ENCODE measurements at regions of chrX and their contacts with region 1.

Region 1: GRCh38 chrX:1165535-1166196 is 46.8 kb downstream of the CRLF2 start:
- DNase-seq: peak; percentile 46
- H3K4me3 Mint-ChIP-seq: peak overlapping the region; percentile 39
- H3K27ac Mint-ChIP-seq: no peak overlapping the region
- H3K4me1 Mint-ChIP-seq: peaks cover 13% of the 10 kb centered on the region
- H3K27me3 Mint-ChIP-seq: peaks cover 8% of the 10 kb centered on the region

Region 2: GRCh38 chrX:572537-573124 is 593.0 kb before region 1 on chrX:
- CTCF ChIA-PET with region 1: no interaction called
- POLR2A ChIA-PET with region 1: no interaction called
- intact Hi-C with region 1: loop called (anchors 10 kb)
- DNase-seq: peak; percentile 12
- H3K4me3 Mint-ChIP-seq: no peak overlapping the region
- H3K27ac Mint-ChIP-seq: no peak overlapping the region
- H3K4me1 Mint-ChIP-seq: no peaks in the 10 kb centered on the region
- H3K27me3 Mint-ChIP-seq: no peaks in the 10 kb centered on the region

Region 3: DNA sequence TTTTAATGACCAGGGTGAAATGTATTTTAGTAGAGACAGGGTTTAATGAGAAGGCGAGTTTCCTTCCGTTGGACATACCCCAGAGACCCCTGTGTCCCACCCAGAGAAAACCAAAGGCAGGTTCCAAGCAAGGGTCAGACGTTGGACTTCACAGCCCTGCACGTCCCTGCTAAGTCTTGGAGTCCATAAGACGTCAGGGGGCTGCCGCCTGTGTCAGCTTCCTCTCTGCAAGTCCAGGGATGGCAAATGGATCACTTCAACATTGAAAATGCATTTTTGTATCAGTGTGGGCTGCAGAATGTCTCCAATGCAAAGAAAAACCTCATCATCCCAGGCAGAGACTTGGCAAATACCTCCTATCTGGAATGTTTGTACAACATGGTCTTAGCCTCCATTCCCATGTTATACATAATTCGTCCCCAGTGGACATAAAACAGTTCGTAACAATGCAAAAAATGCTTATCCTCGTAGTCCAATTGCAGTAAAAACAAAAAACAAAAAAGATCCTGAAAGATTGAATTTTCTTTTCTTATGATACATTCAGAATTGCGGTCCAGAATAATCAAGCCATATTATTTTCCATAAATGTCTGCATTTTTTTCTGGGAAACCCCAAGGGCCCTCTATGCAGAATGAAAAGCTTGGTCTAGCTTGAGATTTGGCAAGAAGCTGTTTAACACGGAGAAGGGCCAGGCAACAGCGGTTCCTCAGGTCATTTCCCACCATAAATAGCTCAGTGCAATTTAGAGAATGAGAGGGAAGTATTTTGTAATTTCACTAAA is 344.1 kb before region 1 on chrX:
- CTCF ChIA-PET with region 1: no interaction called
- POLR2A ChIA-PET with region 1: no interaction called
- intact Hi-C with region 1: no loop called
- DNase-seq: no peak
- H3K4me3 Mint-ChIP-seq: no peak overlapping the region
- H3K27ac Mint-ChIP-seq: no peak overlapping the region
- H3K4me1 Mint-ChIP-seq: no peaks in the 10 kb centered on the region
- H3K27me3 Mint-ChIP-seq: no peaks in the 10 kb centered on the region

Region 4: GRCh38 chrX:915427-916229 is 250.0 kb before region 1 on chrX:
- CTCF ChIA-PET with region 1: no interaction called
- POLR2A ChIA-PET with region 1: no interaction called
- intact Hi-C with region 1: loop called (anchors 10 kb)
- DNase-seq: peak; percentile 41
- H3K4me3 Mint-ChIP-seq: no peak overlapping the region
- H3K27ac Mint-ChIP-seq: no peak overlapping the region
- H3K4me1 Mint-ChIP-seq: no peaks in the 10 kb centered on the region
- H3K27me3 Mint-ChIP-seq: peaks cover 2% of the 10 kb centered on the region

Measured in activated CD4-positive, alpha-beta memory T cell treated with anti-CD3 and anti-CD28 coated beads for 36 hours (primary cell).